ENCODE measurements at regions of chr11 and their contacts with region 1.

Region 1: DNA sequence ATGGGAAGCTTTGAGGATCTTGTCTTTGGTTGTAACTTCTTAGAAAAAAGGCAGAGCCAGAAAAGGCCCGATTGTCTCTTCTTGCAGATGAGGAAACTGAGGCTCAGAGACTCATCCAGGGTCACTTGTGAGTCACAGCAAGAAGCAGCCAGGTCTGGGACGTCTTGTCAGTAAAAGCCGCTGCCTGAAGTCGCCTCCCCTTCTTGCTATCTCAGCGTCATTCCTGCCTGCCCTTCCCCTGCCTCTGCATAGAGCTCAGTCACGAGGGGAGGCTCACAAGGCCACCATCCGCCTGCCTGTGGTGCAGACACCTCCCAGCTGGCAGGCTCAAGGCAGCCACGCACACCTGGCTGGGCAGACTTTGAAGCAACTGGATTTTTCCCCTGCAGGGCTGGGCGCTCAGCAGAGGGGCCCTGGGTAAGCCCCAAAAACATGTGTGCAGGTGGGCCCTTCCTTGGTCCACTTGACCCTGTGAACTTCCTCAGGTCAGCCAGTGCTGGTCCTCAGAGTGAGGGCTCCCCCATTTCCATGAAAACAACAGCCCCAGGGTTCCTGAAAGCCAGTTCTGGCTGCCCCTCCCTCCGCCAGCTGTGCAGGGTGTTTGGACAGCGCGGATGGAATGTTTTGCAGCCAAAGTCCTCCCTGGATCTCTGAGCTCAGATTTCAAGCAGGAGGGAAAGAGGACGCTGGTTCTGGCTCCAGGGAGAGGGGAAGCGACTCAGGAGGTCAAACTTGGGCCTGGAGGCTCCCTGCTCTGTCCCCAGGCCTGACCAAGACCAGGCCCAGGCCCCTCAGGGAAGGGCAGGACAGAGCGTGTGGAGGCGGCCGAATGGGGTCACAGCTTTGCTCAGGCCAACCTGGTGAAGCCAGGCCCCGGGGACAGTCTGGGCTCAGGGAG is 6.0 kb upstream of the RAB3IL1 start:
- DNase-seq: peak; percentile 87
- ATAC-seq: peak; percentile 93
- H3K4me3 ChIP-seq: peak overlapping the region; percentile 27 to 66 (median 42)
- H3K27ac ChIP-seq: peak overlapping the region; percentile 75
- H3K4me1 ChIP-seq: peaks cover 48% of the 10 kb centered on the region
- H3K27me3 ChIP-seq: peaks cover 6 to 24% of the 10 kb centered on the region in 2 experiments
- CTCF ChIP-seq: peak; percentile 30; the same call in 1 of the 2 replicates
- EP300 ChIP-seq: peak in 1 of 2 experiments; percentile 59; a peak in 1 of 4 replicates
- POLR2A ChIP-seq: peak; percentile 38 to 63; a peak in 2 of 4 replicates
- RAD21 ChIP-seq: no peak

Region 2: GRCh38 chr11:61800331-61801281 is 122.8 kb before region 1 on chr11:
- CTCF ChIA-PET with region 1: no interaction called
- POLR2A ChIA-PET with region 1: no interaction called
- in situ Hi-C with region 1: no loop called
- intact Hi-C with region 1: no loop called
- DNase-seq: no peak
- ATAC-seq: no peak
- H3K4me3 ChIP-seq: no peak overlapping the region
- H3K27ac ChIP-seq: no peak overlapping the region
- H3K4me1 ChIP-seq: peaks cover 18% of the 10 kb centered on the region
- H3K27me3 ChIP-seq: no peaks in the 10 kb centered on the region; a peak in 1 of 5 replicates
- CTCF ChIP-seq: no peak
- EP300 ChIP-seq: no peak
- POLR2A ChIP-seq: no peak
- RAD21 ChIP-seq: no peak

Region 3: DNA sequence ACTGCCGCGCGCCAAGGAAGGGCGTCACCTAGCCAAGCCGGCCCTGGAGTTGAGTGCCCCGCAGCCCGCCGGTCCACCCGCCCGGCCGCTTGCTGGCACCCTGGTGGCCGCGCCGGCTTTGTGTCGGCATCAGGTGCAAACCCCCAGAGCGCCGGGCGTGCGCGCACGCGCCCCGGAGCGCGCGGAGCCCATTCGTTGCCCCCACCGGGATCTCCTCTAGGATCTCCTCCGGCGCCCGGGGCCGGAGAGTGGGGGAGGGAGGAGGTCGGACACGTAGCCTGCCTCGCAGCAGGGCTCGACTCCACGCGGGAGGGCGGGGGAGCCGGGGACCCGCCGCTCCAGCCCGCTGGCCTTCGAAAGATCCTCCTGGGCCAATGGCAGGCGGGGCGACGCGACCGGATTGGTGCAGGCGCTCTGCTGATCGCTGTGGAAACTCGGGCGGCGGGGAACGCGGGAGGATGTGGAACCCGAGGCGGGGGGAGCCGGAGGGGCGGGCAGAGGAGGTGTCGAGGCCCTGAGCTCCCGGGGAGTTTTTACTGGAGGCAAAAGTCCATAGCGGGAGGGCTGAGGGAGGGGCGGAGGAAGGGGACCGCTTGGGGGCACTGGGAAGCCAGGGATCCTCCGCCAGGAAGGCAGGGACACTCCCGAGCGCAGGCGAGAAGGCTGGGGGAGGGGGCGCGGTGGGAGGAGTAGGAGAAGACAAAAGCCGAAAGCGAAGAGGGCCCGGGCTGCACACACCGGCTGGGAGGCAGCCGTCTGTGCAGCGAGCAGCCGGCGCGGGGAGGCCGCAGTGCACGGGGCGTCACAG is 95.6 kb before region 1 on chr11 and contains the start of gene FADS2:
- CTCF ChIA-PET with region 1: no interaction called
- POLR2A ChIA-PET with region 1: no interaction called
- in situ Hi-C with region 1: no loop called
- intact Hi-C with region 1: no loop called
- DNase-seq: peak; percentile 55
- ATAC-seq: peak; percentile 79
- H3K4me3 ChIP-seq: peak within 1 kb of the TSS; percentile 62 to 91 (median 82)
- H3K27ac ChIP-seq: peak within 1 kb of the TSS; percentile 74
- H3K4me1 ChIP-seq: peaks cover 41% of the 10 kb centered on the region
- H3K27me3 ChIP-seq: no peaks in the 10 kb centered on the region
- CTCF ChIP-seq: peak; percentile 55
- EP300 ChIP-seq: no peak
- POLR2A ChIP-seq: peak; percentile 62 to 90
- RAD21 ChIP-seq: no peak
- total RNA-seq, gene FADS2: 54.7 and 124 TPM in 2 replicates

Region 4: GRCh38 chr11:61908730-61909315 is 14.6 kb before region 1 on chr11:
- CTCF ChIA-PET with region 1: no interaction called
- POLR2A ChIA-PET with region 1: interaction called, 37 read pairs
- in situ Hi-C with region 1: no loop called
- intact Hi-C with region 1: no loop called
- DNase-seq: no peak
- ATAC-seq: no peak
- H3K4me3 ChIP-seq: no peak overlapping the region
- H3K27ac ChIP-seq: no peak overlapping the region
- H3K4me1 ChIP-seq: peaks cover 35% of the 10 kb centered on the region
- H3K27me3 ChIP-seq: peaks cover 1 to 8% of the 10 kb centered on the region in 2 experiments; a peak in 2 of 5 replicates
- CTCF ChIP-seq: no peak
- EP300 ChIP-seq: no peak
- POLR2A ChIP-seq: no peak
- RAD21 ChIP-seq: no peak

Region 5: GRCh38 chr11:61940466-61940865 is 17.1 kb after region 1 on chr11:
- CTCF ChIA-PET with region 1: no interaction called
- POLR2A ChIA-PET with region 1: interaction called, 4 read pairs
- in situ Hi-C with region 1: no loop called
- intact Hi-C with region 1: loop called (anchors 1 kb)
- DNase-seq: no peak
- ATAC-seq: no peak
- H3K4me3 ChIP-seq: no peak overlapping the region
- H3K27ac ChIP-seq: no peak overlapping the region
- H3K4me1 ChIP-seq: no peaks in the 10 kb centered on the region
- H3K27me3 ChIP-seq: peaks cover 1 to 11% of the 10 kb centered on the region in 2 experiments; a peak in 3 of 5 replicates
- CTCF ChIP-seq: no peak
- EP300 ChIP-seq: no peak
- POLR2A ChIP-seq: no peak
- RAD21 ChIP-seq: no peak

Region 6: GRCh38 chr11:62479631-62480201 is 556.3 kb after region 1 on chr11:
- CTCF ChIA-PET with region 1: no interaction called
- POLR2A ChIA-PET with region 1: no interaction called
- in situ Hi-C with region 1: no loop called
- intact Hi-C with region 1: no loop called
- DNase-seq: no peak
- ATAC-seq: peak; percentile 48
- H3K4me3 ChIP-seq: peak overlapping the region in 1 of 3 experiments; percentile 47; a peak in 1 of 6 replicates
- H3K27ac ChIP-seq: peak overlapping the region; percentile 87
- H3K4me1 ChIP-seq: peaks cover 56% of the 10 kb centered on the region
- H3K27me3 ChIP-seq: no peaks in the 10 kb centered on the region
- CTCF ChIP-seq: no peak
- EP300 ChIP-seq: no peak
- POLR2A ChIP-seq: no peak
- RAD21 ChIP-seq: no peak